ENCODE measurements at regions of chr21 and their contacts with region 1.

Region 1: GRCh38 chr21:33588485-33589335 is at the start of gene DONSON:
- DNase-seq: peak; percentile 76 to 97 (median 89)
- ATAC-seq: peak; percentile 98
- H3K4me3 ChIP-seq: peak within 1 kb of the TSS; percentile 63
- H3K4me3 Mint-ChIP-seq: peak within 1 kb of the TSS; percentile 90 to 96 (median 94)
- H3K27ac ChIP-seq: peak within 1 kb of the TSS; percentile 89
- H3K27ac Mint-ChIP-seq: peak within 1 kb of the TSS; percentile 34 to 96 (median 89)
- H3K4me1 ChIP-seq: peaks cover 5% of the 10 kb centered on the region in 2 donors
- H3K4me1 Mint-ChIP-seq: peaks cover 0 to 31% (median 20%) of the 10 kb centered on the region in 7 donors
- H3K27me3 ChIP-seq: no peaks in the 10 kb centered on the region
- H3K27me3 Mint-ChIP-seq: peaks cover 0 to 1% (median 0%) of the 10 kb centered on the region in 5 donors
- total RNA-seq, gene DONSON: 8.9 to 30.8 (median 10.7) TPM

Region 2: DNA sequence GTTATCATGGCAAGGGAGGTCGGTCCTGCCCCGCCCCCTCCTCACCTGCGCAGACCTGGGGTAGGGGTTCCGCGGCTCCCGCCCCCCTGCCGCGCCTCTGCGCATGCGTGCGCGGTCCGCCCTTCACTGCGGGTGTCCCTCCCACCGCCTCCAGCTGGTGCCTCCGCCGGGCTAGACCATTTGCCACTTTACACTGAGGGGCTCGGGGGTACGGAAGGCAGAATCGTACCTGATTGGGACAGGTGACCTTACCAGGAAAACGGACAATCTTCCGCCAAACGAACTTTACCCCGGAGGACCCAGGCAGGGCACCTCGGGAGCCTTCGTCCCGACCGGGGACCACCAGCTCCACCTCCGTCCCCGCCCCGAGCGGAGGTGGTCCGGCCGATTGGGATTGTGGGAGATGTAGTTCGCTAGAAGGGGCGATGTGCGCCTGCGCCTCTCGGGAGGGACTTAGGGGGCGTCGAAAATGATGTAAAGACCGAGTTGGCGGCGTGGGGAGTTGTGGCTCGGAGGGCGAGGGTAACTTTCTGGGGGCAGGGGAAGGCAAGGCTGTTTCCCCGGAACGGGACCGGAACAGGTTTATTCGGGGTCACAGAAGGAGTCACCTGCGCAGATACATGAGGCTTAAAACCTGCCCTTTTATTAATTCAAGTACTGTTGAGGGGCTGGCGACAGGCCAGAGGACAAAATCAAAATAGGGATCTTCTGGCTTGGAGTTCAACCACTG is 97.2 kb before region 1 on chr21 and contains the start of gene DNAJC28:
- CTCF ChIA-PET with region 1: no interaction called
- POLR2A ChIA-PET with region 1: interaction called, 6 read pairs
- intact Hi-C with region 1: loop called in 1 of 2 experiments (anchors 1 kb)
- DNase-seq: peak; percentile 91 to 96 (median 95)
- ATAC-seq: peak; percentile 99
- H3K4me3 ChIP-seq: peak within 1 kb of the TSS; percentile 93
- H3K4me3 Mint-ChIP-seq: peak within 1 kb of the TSS; percentile 86 to 97 (median 92)
- H3K27ac ChIP-seq: peak within 1 kb of the TSS; percentile 74
- H3K27ac Mint-ChIP-seq: peak within 1 kb of the TSS; percentile 73 to 97 (median 92)
- H3K4me1 ChIP-seq: peaks cover 0 to 5% of the 10 kb centered on the region in 2 donors
- H3K4me1 Mint-ChIP-seq: peaks cover 5 to 14% (median 12%) of the 10 kb centered on the region in 7 donors
- H3K27me3 ChIP-seq: no peaks in the 10 kb centered on the region
- H3K27me3 Mint-ChIP-seq: peaks cover 0 to 15% (median 0%) of the 10 kb centered on the region in 5 donors
- total RNA-seq, gene DNAJC28: 0.27 to 1.5 (median 0.61) TPM in 4 of 5 experiments, not detected in the other

Region 3: GRCh38 chr21:33572350-33572749 is 16.4 kb before region 1 on chr21:
- CTCF ChIA-PET with region 1: no interaction called
- POLR2A ChIA-PET with region 1: interaction called, 6 read pairs
- intact Hi-C with region 1: loop called in 1 of 2 experiments (anchors 1 kb)
- DNase-seq: no peak
- ATAC-seq: no peak
- H3K4me3 ChIP-seq: no peak overlapping the region
- H3K4me3 Mint-ChIP-seq: no peak overlapping the region
- H3K27ac ChIP-seq: no peak overlapping the region
- H3K27ac Mint-ChIP-seq: peak overlapping the region in 6 of 9 donors; percentile 22 to 73 (median 56)
- H3K4me1 ChIP-seq: no peaks in the 10 kb centered on the region
- H3K4me1 Mint-ChIP-seq: peaks cover 9 to 29% (median 15%) of the 10 kb centered on the region in 7 donors
- H3K27me3 ChIP-seq: no peaks in the 10 kb centered on the region
- H3K27me3 Mint-ChIP-seq: no peaks in the 10 kb centered on the region

Region 4: GRCh38 chr21:33608559-33608958 is 19.8 kb after region 1 on chr21:
- CTCF ChIA-PET with region 1: interaction called, 8 read pairs
- POLR2A ChIA-PET with region 1: interaction called, 8 read pairs
- intact Hi-C with region 1: loop called (anchors 1 to 2 kb)
- DNase-seq: no peak
- ATAC-seq: no peak
- H3K4me3 ChIP-seq: no peak overlapping the region
- H3K4me3 Mint-ChIP-seq: no peak overlapping the region
- H3K27ac ChIP-seq: no peak overlapping the region
- H3K27ac Mint-ChIP-seq: peak overlapping the region in 1 of 9 donors; percentile 7
- H3K4me1 ChIP-seq: no peaks in the 10 kb centered on the region
- H3K4me1 Mint-ChIP-seq: peaks cover 0 to 5% (median 4%) of the 10 kb centered on the region in 7 donors
- H3K27me3 ChIP-seq: no peaks in the 10 kb centered on the region
- H3K27me3 Mint-ChIP-seq: no peaks in the 10 kb centered on the region

Measured in naive thymus-derived CD4-positive, alpha-beta T cell (primary cell).